ENCODE measurements at regions of chr3 and their contacts with region 1.

Region 1: GRCh38 chr3:12484198-12484974 is at the start of gene TSEN2:
- DNase-seq: peak; percentile 94 to 96 (median 95)
- H3K4me3 ChIP-seq: peak within 1 kb of the TSS; percentile 66 to 93 (median 91)
- H3K4me3 Mint-ChIP-seq: peak within 1 kb of the TSS; percentile 96 to 98
- H3K27ac ChIP-seq: peak within 1 kb of the TSS; percentile 83 to 84
- H3K27ac Mint-ChIP-seq: peak within 1 kb of the TSS; percentile 91 to 97 (median 95)
- H3K4me1 ChIP-seq: peaks cover 51 to 55% of the 10 kb centered on the region in 2 donors
- H3K4me1 Mint-ChIP-seq: peaks cover 53% of the 10 kb centered on the region
- H3K27me3 ChIP-seq: no peaks in the 10 kb centered on the region
- H3K27me3 Mint-ChIP-seq: peaks cover 0 to 2% (median 0%) of the 10 kb centered on the region in 3 donors
- CTCF ChIP-seq: no peak
- polyA plus RNA-seq, gene TSEN2: 3.2 to 7.3 (median 3.9) TPM

Region 2: GRCh38 chr3:12287727-12288191 is 196.6 kb before region 1 on chr3:
- intact Hi-C with region 1: loop called in 1 of 2 experiments (anchors 5 kb)
- DNase-seq: peak; percentile 47 to 60 (median 54)
- H3K4me3 ChIP-seq: peak overlapping the region; percentile 50 to 80 (median 78)
- H3K4me3 Mint-ChIP-seq: peak overlapping the region; percentile 85 to 88
- H3K27ac ChIP-seq: peak overlapping the region in 1 of 2 donors; percentile 61
- H3K27ac Mint-ChIP-seq: peak overlapping the region in 6 of 7 donors; percentile 70 to 96 (median 77)
- H3K4me1 ChIP-seq: peaks cover 16 to 17% of the 10 kb centered on the region in 2 donors
- H3K4me1 Mint-ChIP-seq: peaks cover 18% of the 10 kb centered on the region
- H3K27me3 ChIP-seq: peaks cover 20 to 32% of the 10 kb centered on the region in 2 donors
- H3K27me3 Mint-ChIP-seq: peaks cover 38 to 52% (median 38%) of the 10 kb centered on the region in 3 donors
- CTCF ChIP-seq: no peak

Region 3: DNA sequence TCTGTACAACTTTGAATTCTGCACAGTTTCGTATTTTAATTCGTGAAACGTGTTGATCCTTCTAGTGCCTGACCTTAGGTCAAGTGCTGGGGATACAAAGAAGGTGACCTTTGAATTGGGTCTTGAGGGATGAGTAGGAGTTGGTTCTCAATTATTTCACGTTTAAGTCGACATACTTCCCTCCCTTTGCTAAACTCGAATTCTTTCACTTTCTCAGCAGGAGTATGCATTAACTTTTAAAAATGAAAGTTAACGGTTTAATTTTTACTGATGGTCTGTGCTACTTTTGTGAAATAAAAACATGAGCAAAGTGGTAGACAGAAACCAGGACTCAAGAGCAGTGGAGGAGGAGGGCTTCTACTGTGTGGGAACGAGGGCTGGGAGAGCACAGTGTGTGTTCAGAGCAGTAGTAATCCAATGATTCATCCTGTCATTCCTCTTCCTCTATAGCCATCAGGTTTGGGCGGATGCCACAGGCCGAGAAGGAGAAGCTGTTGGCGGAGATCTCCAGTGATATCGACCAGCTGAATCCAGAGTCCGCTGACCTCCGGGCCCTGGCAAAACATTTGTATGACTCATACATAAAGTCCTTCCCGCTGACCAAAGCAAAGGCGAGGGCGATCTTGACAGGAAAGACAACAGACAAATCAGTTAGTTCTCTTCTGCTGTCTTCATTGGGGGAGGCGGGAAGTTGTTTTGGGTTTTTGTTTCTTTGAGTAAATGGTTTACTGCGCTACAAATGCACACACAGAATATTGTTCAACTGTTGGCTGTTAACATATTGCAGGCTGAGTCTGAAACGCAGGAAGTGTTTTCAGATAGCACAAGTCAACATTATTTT is 78.7 kb before region 1 on chr3:
- intact Hi-C with region 1: loop called in 1 of 2 experiments (anchors 5 kb)
- DNase-seq: peak; percentile 79 to 91 (median 86)
- H3K4me3 ChIP-seq: peak overlapping the region in 1 of 3 experiments; percentile 24
- H3K4me3 Mint-ChIP-seq: peak overlapping the region; percentile 9 to 14
- H3K27ac ChIP-seq: peak overlapping the region in 1 of 2 donors; percentile 23
- H3K27ac Mint-ChIP-seq: peak overlapping the region; percentile 31 to 87 (median 55)
- H3K4me1 ChIP-seq: peaks cover 16 to 25% of the 10 kb centered on the region in 2 donors
- H3K4me1 Mint-ChIP-seq: peaks cover 22% of the 10 kb centered on the region
- H3K27me3 ChIP-seq: no peaks in the 10 kb centered on the region
- H3K27me3 Mint-ChIP-seq: peaks cover 0 to 3% (median 0%) of the 10 kb centered on the region in 3 donors
- CTCF ChIP-seq: no peak

Region 4: GRCh38 chr3:12436514-12437220 is 47.7 kb before region 1 on chr3:
- intact Hi-C with region 1: no loop called
- DNase-seq: no peak
- H3K4me3 ChIP-seq: no peak overlapping the region
- H3K4me3 Mint-ChIP-seq: no peak overlapping the region
- H3K27ac ChIP-seq: no peak overlapping the region
- H3K27ac Mint-ChIP-seq: no peak overlapping the region
- H3K4me1 ChIP-seq: no peaks in the 10 kb centered on the region
- H3K4me1 Mint-ChIP-seq: no peaks in the 10 kb centered on the region
- H3K27me3 ChIP-seq: no peaks in the 10 kb centered on the region
- H3K27me3 Mint-ChIP-seq: peaks cover 3 to 14% (median 8%) of the 10 kb centered on the region in 3 donors
- CTCF ChIP-seq: no peak

Measured in CD14-positive monocyte (primary cell).